ENCODE measurements at regions of chr2 and their contacts with region 1.

Region 1: DNA sequence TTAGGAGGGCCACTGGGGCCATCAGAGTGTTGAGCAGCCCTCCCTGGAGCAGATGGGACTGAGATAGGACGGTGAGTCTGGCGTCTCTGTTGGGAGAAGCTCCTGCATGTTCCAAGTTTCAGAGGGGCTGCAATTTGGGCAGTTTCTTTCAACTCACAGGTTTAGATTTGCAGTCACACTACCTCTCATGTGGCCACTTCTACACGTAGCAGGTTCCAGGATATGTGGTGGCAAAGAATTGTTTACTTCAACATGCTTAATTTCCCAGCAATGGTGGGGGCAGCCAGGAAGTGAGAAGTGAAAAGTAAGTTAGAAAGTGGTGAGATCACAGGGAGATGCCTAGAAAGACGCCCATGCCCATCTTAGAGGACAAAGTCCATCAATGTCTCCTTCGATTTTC is 9.3 kb downstream of the NCK2 start:
- DNase-seq: peak; percentile 71
- ATAC-seq: peak; percentile 59
- H3K4me3 Mint-ChIP-seq: peak overlapping the region; percentile 35
- H3K27ac Mint-ChIP-seq: peak overlapping the region; percentile 88
- H3K4me1 Mint-ChIP-seq: peaks cover 91% of the 10 kb centered on the region
- H3K27me3 Mint-ChIP-seq: no peaks in the 10 kb centered on the region

Region 2: GRCh38 chr2:105775809-105776559 is 22.0 kb after region 1 on chr2:
- CTCF ChIA-PET with region 1: interaction called, 11 read pairs
- POLR2A ChIA-PET with region 1: interaction called, 23 read pairs
- DNase-seq: peak; percentile 58
- ATAC-seq: peak; percentile 76
- H3K4me3 Mint-ChIP-seq: peak overlapping the region; percentile 63
- H3K27ac Mint-ChIP-seq: peak overlapping the region; percentile 85
- H3K4me1 Mint-ChIP-seq: peaks cover 87% of the 10 kb centered on the region
- H3K27me3 Mint-ChIP-seq: no peaks in the 10 kb centered on the region